Left colon (tissue), 2 donors: ENCODE measurements at regions of chr19 and their contacts with region 1.

Region 1: DNA sequence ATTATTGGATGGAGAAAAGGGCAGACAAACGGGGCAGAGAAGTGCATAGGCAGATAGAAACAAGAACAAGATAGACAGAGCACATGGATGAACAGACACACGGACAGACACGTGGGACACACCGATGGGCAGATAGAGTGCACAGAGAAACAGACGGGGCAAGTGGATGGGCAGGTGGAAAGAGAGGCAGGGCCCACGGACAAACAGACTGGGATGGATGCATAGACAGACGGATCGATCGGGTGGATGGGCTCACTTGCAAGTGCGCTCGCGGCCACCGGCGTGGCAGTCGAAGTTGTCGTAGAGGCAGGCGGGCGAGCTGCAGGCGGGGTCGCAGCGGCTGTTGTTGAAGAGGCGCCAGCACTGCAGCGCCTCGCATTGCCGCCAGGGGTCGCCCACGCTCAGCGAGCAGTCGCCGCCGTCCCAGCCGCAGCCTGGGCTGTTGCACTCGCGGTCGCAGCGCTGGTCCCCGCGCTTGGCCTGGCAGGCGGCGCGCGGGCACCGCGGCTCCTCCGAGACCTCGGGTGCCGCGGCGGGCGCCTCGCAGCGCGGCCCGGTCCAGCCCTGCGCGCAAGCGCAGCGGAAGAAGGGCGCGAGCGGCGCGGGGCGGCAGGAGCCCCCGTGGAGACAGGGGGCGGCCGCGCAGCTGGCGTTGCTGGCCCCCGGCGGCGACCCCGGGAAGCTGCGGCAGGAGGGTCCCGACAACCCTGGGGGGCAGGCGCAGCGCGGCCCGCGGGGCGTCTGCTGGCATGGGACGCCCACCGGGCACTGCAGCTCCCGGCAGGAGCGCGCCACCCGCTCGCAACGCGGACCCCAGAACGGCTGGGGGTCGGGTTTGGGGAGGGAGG is 23.3 kb downstream of the NOTCH3 start:
- DNase-seq: peak; percentile 49 to 87
- ATAC-seq: peak; percentile 64

Region 2: DNA sequence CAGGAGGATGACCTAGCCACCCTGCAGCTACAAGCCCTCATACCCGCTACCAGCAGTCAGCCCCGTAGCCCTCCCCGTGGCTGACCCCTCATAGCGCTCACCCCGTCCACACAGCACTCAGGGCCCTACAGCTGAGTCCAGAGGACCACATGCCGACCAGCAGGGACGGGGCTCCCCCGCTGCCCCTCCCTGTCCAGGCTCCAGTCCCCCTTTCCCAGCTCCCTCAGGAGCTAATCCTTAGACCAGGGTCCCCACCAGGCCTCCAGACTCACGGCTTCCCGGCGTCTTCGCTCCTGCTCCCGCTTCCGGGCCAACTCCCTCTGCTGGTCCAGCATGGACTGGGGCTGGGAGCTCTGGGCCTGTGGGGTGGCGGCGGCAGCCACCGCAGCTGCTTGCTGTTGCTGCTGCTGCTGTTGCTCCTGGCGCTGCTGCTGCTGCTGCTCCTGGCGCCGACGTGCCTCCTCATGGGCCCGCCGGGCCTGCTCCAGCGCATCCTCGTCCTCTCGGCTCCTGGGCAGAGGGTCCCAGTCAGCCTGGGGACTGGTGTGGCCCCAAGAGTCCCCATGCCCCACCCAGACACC is 61.1 kb after region 1 on chr19:
- intact Hi-C with region 1: no loop called
- DNase-seq: no peak
- ATAC-seq: no peak

Region 3: DNA sequence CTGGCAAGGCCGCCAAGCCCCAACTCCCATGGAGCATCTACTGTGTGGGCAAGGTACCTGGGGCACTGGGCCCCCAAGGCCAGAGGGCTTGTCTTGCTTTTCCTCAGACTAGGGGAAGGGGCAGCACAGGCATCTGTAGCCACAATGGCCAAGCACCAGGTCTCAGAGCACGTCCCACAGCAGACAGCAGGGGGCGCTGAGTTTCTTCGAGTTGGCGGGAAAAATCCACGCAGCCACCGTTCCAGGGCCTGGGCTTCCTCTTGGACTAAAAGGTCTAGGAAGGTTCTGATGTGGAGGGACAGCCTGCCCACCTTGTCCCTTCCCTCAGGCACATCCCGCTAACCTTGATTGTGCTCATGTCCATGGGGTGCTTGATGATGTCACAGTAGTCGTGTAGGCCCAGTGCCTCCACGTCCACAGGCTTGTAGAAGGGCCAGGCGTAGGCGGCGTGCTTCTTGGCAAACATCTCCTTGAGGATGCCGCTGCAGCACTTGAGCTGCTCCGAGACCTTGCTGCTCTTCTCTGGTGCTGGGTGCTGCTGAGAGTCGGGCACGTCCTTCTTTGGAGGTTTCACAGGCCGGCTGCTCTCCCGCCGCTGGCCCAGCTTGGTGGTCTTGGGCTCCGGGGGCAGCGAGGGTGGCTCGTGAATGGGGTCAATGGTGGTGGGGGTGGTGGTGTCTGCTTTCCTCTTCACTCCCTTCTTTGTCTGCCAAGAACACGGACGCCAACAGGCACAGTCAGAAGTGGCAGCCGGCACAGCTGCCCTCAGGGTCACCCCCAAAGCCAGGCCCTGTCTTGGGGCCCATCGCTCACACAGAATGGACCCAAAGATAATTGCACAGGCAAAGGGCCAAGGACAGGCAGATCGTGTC is 86.8 kb after region 1 on chr19:
- intact Hi-C with region 1: loop called in 1 of 2 experiments (anchors 5 kb)
- DNase-seq: peak; percentile 53 to 83
- ATAC-seq: peak; percentile 58